Aorta (tissue), 5 donors: ENCODE measurements at regions of chr3 and their contacts with region 1.

Region 1: DNA sequence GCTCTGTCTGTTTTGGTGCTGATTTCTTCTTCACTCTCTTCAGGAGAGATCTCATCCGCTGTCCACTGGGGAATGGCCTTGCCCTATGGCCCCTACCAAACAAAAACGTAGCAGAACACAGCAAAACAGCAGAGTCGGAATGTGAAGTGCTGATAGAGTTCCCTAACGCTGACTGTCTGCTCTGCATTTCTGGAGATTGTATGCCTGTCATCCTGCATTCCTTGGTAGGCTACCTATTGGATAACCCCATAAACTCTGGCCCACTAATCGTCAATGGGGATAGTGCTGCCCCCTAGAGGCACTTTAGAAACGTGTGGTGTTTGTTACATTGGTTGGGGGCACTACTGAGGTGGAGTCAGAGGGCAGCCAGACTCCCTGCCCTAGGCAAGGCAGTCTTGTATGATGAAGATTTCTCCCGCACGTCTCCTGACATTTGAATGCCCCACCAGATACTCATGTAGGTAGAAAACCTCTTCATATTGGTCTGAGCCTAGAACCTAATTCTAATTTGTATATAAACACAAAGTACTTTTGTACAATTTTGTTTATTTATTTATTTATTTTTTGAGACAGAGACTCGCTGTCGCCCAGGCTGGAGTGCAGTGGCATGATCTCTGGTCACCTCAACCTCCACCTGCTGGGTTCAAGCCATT is 15.6 kb upstream of the MAGEF1 start:
- DNase-seq: peak in 1 of 2 donors; percentile 60
- ATAC-seq: peak; percentile 87
- H3K4me3 ChIP-seq: no peak overlapping the region
- H3K27ac ChIP-seq: no peak overlapping the region
- H3K4me1 ChIP-seq: no peaks in the 10 kb centered on the region
- H3K27me3 ChIP-seq: no peaks in the 10 kb centered on the region

Region 2: DNA sequence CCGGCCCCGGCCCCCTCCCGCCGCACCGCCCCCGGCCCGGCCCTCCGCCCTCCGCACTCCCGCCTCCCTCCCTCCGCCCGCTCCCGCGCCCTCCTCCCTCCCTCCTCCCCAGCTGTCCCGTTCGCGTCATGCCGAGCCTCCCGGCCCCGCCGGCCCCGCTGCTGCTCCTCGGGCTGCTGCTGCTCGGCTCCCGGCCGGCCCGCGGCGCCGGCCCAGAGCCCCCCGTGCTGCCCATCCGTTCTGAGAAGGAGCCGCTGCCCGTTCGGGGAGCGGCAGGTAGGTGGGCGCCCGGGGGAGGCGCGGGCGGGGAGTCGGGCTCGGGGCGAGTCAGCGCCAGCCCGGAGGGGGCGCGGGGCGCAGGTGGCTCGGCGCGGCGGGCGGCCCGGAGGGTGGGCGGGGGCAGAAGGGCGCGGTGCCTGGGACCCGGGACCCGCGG is 347.3 kb before region 1 on chr3:
- intact Hi-C with region 1: no loop called
- DNase-seq: peak; percentile 84 to 93
- ATAC-seq: no peak
- H3K4me3 ChIP-seq: peak overlapping the region; percentile 63 to 81
- H3K27ac ChIP-seq: no peak overlapping the region
- H3K4me1 ChIP-seq: no peaks in the 10 kb centered on the region
- H3K27me3 ChIP-seq: no peaks in the 10 kb centered on the region

Region 3: GRCh38 chr3:184561061-184561912 is 166.2 kb before region 1 on chr3 and contains the start of gene EPHB3:
- intact Hi-C with region 1: loop called in 1 of 2 experiments (anchors 1 kb)
- DNase-seq: peak; percentile 99 to 100
- ATAC-seq: peak; percentile 97
- H3K4me3 ChIP-seq: peak within 1 kb of the TSS; percentile 63 to 69
- H3K27ac ChIP-seq: no peak within 1 kb of the TSS
- H3K4me1 ChIP-seq: no peaks in the 10 kb centered on the region
- H3K27me3 ChIP-seq: no peaks in the 10 kb centered on the region
- total RNA-seq, gene EPHB3: 2.8 to 9.0 TPM

Region 4: GRCh38 chr3:184777336-184778004 is 50.0 kb after region 1 on chr3:
- intact Hi-C with region 1: loop called in 1 of 2 experiments (anchors 5 kb)
- DNase-seq: peak; percentile 91 to 94
- ATAC-seq: peak; percentile 91
- H3K4me3 ChIP-seq: no peak overlapping the region
- H3K27ac ChIP-seq: no peak overlapping the region
- H3K4me1 ChIP-seq: no peaks in the 10 kb centered on the region
- H3K27me3 ChIP-seq: no peaks in the 10 kb centered on the region

Region 5: GRCh38 chr3:184907681-184908649 is 180.5 kb after region 1 on chr3:
- intact Hi-C with region 1: no loop called
- DNase-seq: peak; percentile 44 to 76
- ATAC-seq: peak; percentile 69
- H3K4me3 ChIP-seq: no peak overlapping the region
- H3K27ac ChIP-seq: peak overlapping the region in 1 of 2 donors; percentile 5
- H3K4me1 ChIP-seq: peaks cover 0 to 3% of the 10 kb centered on the region in 2 donors
- H3K27me3 ChIP-seq: no peaks in the 10 kb centered on the region